HEK293T (cell line): ENCODE measurements at regions of chr2 and their contacts with region 1.

Region 1: GRCh38 chr2:37394796-37395555 is 50.5 kb downstream of the QPCT start:
- DNase-seq: no peak

Region 2: GRCh38 chr2:37263839-37264238 is 131.1 kb before region 1 on chr2:
- CTCF ChIA-PET with region 1: no interaction called
- POLR2A ChIA-PET with region 1: no interaction called
- DNase-seq: no peak

Region 3: GRCh38 chr2:37376421-37377186 is 18.4 kb before region 1 on chr2:
- CTCF ChIA-PET with region 1: interaction called, 11 read pairs
- POLR2A ChIA-PET with region 1: no interaction called
- DNase-seq: peak; percentile 64

Region 4: GRCh38 chr2:37832590-37833197 is 437.7 kb after region 1 on chr2:
- CTCF ChIA-PET with region 1: interaction called, 20 read pairs
- POLR2A ChIA-PET with region 1: no interaction called
- DNase-seq: peak; percentile 69

Region 5: DNA sequence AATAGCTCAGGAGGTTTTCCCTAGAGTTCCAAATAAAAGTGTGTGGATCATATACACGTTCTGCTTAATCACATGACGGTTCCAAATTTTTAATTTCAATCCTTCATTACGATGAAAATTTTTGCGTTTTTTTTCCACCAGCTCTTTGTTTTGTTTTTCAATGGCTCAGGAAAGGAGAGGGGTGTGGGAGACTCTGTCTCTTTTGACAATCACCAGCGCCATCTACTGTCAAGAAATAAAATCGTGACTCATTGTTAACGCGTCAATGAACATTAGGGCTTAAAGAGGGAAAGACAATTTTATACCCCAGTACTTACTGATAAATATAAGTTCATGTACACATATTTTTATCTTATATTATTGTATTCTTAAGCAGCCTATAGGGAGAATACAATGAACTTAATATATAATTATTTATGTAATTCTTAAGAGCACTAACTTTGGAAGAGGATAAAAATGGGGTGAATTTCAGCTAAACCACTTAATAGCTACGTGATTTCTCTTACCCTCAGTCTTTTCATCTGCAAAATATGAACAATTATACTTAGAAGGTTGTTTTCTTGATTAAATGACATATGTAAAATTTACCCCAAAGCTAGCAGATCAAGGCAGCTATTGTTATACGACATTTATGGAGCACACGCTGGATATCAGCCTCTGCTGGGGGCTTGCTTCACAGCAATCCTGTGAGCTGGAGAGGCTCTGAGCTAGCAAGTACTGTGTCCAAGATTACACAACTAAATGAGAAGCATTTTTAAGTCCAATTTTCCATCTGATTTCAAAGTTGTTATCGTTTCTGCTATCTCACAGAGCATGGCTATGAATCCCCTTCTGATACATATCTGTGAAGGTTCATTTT is 482.7 kb after region 1 on chr2:
- CTCF ChIA-PET with region 1: interaction called, 42 read pairs
- POLR2A ChIA-PET with region 1: no interaction called
- DNase-seq: peak; percentile 50